GM10248 (cell line): ENCODE measurements at regions of chr9 and their contacts with region 1.

Region 1: GRCh38 chr9:36023260-36024048 is 13.3 kb upstream of the RECK start:
- DNase-seq: peak; percentile 72
- CTCF ChIP-seq: peak; percentile 84

Region 2: DNA sequence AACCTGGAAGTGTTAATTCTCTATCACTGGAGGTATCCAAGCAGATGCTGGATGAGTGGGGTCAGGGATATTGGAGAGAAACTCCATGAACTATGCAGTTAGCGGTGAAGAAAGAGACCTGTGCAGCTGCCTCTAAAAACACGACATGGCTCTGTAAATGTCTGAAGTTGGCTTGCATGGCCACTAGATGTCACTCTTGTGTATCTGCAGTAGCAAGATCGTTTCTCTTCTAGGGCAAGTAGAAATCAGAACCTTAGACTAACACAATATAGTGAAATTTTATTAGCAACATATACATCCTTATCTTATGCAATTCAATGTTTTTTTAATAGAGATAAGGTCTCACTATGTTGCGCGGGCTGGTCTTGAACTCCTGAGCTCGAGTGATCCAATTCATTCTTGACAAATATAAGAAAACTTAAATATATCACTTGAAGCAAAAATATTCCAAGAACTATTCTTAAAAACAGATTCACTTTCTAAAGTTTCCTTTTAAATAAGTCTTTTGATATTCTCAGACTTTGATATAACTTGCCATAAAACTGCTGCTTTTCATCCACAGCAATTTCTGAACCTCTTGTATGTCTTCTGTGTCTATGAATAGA is 68.4 kb before region 1 on chr9:
- CTCF ChIA-PET with region 1: interaction called, 81 read pairs
- POLR2A ChIA-PET with region 1: no interaction called
- DNase-seq: peak; percentile 71
- CTCF ChIP-seq: peak; percentile 80

Region 3: DNA sequence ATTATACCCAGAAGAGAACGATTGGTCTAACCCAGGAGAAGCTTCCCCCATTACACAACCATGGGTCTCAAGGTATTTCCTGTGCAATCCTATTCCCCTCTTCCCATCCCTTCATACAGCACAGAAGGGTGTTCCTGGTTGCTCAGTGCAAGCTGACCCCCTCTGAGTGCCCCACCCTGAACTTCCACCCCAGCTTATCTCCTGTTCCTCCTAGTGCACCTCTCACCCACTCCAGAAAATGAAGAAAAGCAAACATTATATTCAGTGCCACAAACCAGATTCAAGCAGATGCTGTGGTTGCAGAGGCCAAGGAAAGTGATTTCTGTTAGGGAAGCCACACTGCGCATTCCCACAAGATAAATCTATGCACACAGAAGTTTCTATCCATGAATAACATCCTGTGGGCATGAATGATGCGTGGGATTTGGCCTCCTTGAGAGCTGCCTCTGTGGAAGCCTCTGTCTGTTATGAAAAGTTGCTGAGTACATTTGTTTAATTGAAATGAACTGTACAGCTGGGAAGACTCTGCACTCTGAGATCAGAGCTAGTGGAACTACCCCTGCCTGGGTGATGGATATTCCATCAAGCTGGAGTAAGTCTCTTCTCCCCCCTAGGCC is 63.3 kb before region 1 on chr9:
- CTCF ChIA-PET with region 1: interaction called, 81 read pairs
- POLR2A ChIA-PET with region 1: no interaction called
- DNase-seq: no peak
- CTCF ChIP-seq: no peak

Region 4: DNA sequence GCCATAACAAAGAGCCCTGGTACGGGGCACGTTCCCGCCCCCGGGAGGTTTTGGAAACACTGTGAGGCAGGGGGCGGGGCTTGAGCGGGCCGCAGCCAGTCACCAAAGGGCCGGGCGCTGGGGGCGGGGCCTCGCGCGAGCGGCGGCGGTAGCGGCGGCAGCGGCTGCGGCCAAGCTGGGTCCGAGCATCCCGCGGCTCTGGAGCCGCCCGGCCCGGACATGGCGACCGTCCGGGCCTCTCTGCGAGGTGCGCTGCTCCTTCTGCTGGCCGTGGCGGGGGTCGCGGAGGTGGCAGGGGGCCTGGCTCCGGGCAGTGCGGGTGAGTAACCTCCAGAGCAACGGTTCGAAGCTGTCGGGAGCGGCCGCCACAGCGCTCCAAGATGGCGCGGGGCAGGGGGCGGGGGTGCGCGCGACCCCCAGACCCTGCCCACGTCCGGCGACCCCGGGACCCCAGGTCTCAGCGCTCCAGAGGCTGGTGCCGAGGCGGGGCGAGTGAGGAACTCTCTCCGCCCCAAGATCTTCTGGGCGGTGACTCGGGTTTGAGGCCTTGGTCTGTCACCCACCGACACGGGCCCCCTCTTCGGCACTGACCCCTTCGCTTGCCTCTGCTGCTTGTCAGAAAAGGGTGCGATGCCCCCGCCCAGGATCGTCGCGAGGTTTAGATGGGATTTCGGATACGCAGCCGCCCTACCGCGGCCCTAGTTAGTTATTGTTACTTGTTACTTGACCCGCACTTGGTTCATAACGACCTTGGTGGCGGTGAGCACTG is 13.5 kb after region 1 on chr9 and contains the start of gene RECK:
- CTCF ChIA-PET with region 1: interaction called, 33 read pairs
- POLR2A ChIA-PET with region 1: no interaction called
- DNase-seq: peak; percentile 95
- CTCF ChIP-seq: no peak